ENCODE measurements at regions of chr2 and their contacts with region 1.

Region 1: GRCh38 chr2:237026981-237027711 is 58.5 kb upstream of the COPS8 start:
- DNase-seq: peak; percentile 64 to 93
- H3K4me3 ChIP-seq: no peak overlapping the region
- CTCF ChIP-seq: peak in 1 of 3 donors; percentile 86
- POLR2A ChIP-seq: no peak

Region 2: GRCh38 chr2:236512902-236513435 is 514.2 kb before region 1 on chr2:
- intact Hi-C with region 1: loop called (anchors 10 kb)
- DNase-seq: peak; percentile 29 to 89
- H3K4me3 ChIP-seq: no peak overlapping the region
- CTCF ChIP-seq: peak in 1 of 3 donors; percentile 68
- POLR2A ChIP-seq: no peak

Region 3: DNA sequence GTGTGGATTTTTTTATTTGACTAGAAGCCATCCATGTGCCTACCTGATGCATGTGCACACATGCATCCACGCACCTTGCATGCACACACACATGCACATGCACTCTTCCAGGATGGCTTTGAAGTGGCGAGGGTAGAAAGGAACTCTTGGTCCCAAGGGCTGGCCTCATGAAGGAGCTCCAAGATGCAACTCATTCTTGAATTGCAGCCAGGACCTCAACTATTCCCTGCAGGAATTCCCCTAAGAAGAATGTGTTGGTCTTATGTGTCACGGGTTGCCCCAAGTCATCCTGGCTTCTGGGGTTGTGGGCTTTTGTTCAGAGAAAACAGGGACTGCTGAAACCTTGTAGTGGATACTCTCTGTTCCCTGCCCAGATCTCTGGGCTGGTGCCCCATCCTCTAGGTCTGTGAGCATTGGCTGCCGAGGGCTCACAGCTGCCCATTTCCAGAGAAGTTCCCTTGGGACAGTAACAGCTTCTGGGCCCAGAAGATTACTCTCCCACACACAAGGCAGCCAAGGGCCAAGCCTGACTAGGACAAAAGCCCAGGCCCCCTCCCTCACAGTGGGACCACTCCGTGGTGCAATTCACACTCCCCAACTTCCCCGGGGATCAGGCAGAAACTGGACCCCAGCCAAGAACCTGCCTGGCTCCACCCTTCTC is 196.2 kb after region 1 on chr2:
- intact Hi-C with region 1: no loop called
- DNase-seq: no peak
- H3K4me3 ChIP-seq: no peak overlapping the region
- CTCF ChIP-seq: no peak
- POLR2A ChIP-seq: no peak

Measured in lower leg skin (tissue), 4 donors.